ENCODE measurements at regions of chr7 and their contacts with region 1.

Region 1: GRCh38 chr7:20164425-20165145 is 52.6 kb downstream of the MACC1 start:
- DNase-seq: no peak
- ATAC-seq: no peak
- H3K4me3 ChIP-seq: no peak overlapping the region
- H3K27ac ChIP-seq: peak overlapping the region in 2 of 10 donors; percentile 26 to 35
- H3K4me1 ChIP-seq: peaks cover 0 to 13% (median 0%) of the 10 kb centered on the region in 9 donors
- H3K27me3 ChIP-seq: no peaks in the 10 kb centered on the region
- CTCF ChIP-seq: no peak

Region 2: DNA sequence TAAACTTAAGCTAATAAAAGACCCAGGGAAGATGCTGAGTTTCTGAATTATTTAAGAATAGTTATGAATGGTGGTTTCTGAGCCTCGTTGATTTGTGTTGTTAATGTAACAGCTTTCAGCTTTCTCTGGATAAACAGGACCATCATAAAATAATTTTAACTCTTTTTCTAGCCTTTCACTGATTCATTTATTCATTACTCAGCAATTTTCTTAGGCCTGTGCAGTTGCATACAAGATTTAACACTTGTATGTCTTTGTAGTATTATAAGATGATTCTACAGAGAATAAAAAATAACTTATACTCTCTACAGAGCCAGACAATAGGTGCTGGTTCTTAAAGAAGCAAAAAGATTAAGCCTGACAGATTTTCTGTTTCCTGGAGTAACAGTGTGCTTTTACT is 420.5 kb before region 1 on chr7:
- intact Hi-C with region 1: no loop called
- DNase-seq: no peak
- ATAC-seq: no peak
- H3K4me3 ChIP-seq: no peak overlapping the region
- H3K27ac ChIP-seq: no peak overlapping the region
- H3K4me1 ChIP-seq: no peaks in the 10 kb centered on the region
- H3K27me3 ChIP-seq: peaks cover 0 to 9% (median 0%) of the 10 kb centered on the region in 7 donors
- CTCF ChIP-seq: no peak

Region 3: GRCh38 chr7:20280475-20281351 is 116.1 kb after region 1 on chr7:
- intact Hi-C with region 1: no loop called
- DNase-seq: no peak
- ATAC-seq: no peak
- H3K4me3 ChIP-seq: no peak overlapping the region
- H3K27ac ChIP-seq: no peak overlapping the region
- H3K4me1 ChIP-seq: no peaks in the 10 kb centered on the region
- H3K27me3 ChIP-seq: no peaks in the 10 kb centered on the region
- CTCF ChIP-seq: no peak

Region 4: GRCh38 chr7:20310963-20311742 is 146.6 kb after region 1 on chr7:
- intact Hi-C with region 1: loop called in 7 of 10 experiments (anchors 5 to 10 kb)
- DNase-seq: no peak
- ATAC-seq: no peak
- H3K4me3 ChIP-seq: no peak overlapping the region
- H3K27ac ChIP-seq: no peak overlapping the region
- H3K4me1 ChIP-seq: peaks cover 0 to 5% (median 0%) of the 10 kb centered on the region in 9 donors
- H3K27me3 ChIP-seq: no peaks in the 10 kb centered on the region
- CTCF ChIP-seq: peak in 8 of 9 donors; percentile 17 to 50 (median 34)

Region 5: DNA sequence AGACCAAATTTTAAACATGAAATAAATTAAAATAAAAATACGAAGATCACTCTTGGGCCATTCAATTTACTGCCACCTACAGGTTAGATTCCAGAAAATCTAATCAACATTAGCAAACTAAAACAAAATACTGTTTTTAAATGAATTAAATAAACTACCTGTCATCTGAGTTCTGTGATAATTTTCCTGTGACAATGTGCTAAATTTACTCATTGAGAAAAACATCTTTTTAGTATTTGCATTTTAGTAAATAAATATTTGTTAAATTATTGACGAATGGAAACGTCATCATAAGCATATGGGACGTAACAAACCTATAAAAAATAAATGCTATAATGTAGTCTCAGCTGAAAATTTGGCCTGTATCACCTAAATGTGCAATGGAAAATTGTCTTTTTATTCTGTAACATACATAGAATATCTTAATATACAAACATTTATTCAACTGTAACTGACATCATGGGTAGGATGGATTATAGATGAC is 238.2 kb after region 1 on chr7:
- intact Hi-C with region 1: loop called in 1 of 10 experiments (anchors 5 kb)
- DNase-seq: no peak
- ATAC-seq: no peak
- H3K4me3 ChIP-seq: no peak overlapping the region
- H3K27ac ChIP-seq: no peak overlapping the region
- H3K4me1 ChIP-seq: peaks cover 0 to 27% (median 15%) of the 10 kb centered on the region in 9 donors
- H3K27me3 ChIP-seq: no peaks in the 10 kb centered on the region
- CTCF ChIP-seq: peak in 7 of 9 donors; percentile 26 to 56 (median 46)